T-cell (primary cell): ENCODE measurements at regions of chr18 and their contacts with region 1.

Region 1: GRCh38 chr18:30066288-30066687 is 976.3 kb downstream of the DSC3 start:
- DNase-seq: no peak
- ATAC-seq: no peak
- H3K4me3 ChIP-seq: no peak overlapping the region
- H3K4me3 Mint-ChIP-seq: no peak overlapping the region
- H3K27ac ChIP-seq: no peak overlapping the region
- H3K27ac Mint-ChIP-seq: no peak overlapping the region
- H3K4me1 ChIP-seq: no peaks in the 10 kb centered on the region
- H3K4me1 Mint-ChIP-seq: no peaks in the 10 kb centered on the region
- H3K27me3 ChIP-seq: no peaks in the 10 kb centered on the region
- H3K27me3 Mint-ChIP-seq: no peaks in the 10 kb centered on the region

Region 2: GRCh38 chr18:29874519-29875098 is 191.7 kb before region 1 on chr18:
- CTCF ChIA-PET with region 1: interaction called in 1 of 2 experiments, 10 read pairs
- POLR2A ChIA-PET with region 1: no interaction called
- DNase-seq: no peak
- ATAC-seq: no peak
- H3K4me3 ChIP-seq: no peak overlapping the region
- H3K4me3 Mint-ChIP-seq: no peak overlapping the region
- H3K27ac ChIP-seq: no peak overlapping the region
- H3K27ac Mint-ChIP-seq: no peak overlapping the region
- H3K4me1 ChIP-seq: no peaks in the 10 kb centered on the region
- H3K4me1 Mint-ChIP-seq: no peaks in the 10 kb centered on the region
- H3K27me3 ChIP-seq: no peaks in the 10 kb centered on the region
- H3K27me3 Mint-ChIP-seq: no peaks in the 10 kb centered on the region